ENCODE measurements at regions of chr7 and their contacts with region 1.

Region 1: GRCh38 chr7:155644178-155644970 is at the start of gene RBM33:
- DNase-seq: peak; percentile 63 to 84 (median 74)
- H3K4me3 ChIP-seq: peak within 1 kb of the TSS; percentile 78 to 100 (median 97)
- H3K27ac ChIP-seq: peak within 1 kb of the TSS; percentile 71 to 99 (median 94)
- H3K27me3 ChIP-seq: no peaks in the 10 kb centered on the region
- CTCF ChIP-seq: peak in 23 of 56 donors; percentile 1 to 61 (median 27)
- total RNA-seq, gene RBM33: 60.5 to 127 (median 90.5) TPM

Region 2: DNA sequence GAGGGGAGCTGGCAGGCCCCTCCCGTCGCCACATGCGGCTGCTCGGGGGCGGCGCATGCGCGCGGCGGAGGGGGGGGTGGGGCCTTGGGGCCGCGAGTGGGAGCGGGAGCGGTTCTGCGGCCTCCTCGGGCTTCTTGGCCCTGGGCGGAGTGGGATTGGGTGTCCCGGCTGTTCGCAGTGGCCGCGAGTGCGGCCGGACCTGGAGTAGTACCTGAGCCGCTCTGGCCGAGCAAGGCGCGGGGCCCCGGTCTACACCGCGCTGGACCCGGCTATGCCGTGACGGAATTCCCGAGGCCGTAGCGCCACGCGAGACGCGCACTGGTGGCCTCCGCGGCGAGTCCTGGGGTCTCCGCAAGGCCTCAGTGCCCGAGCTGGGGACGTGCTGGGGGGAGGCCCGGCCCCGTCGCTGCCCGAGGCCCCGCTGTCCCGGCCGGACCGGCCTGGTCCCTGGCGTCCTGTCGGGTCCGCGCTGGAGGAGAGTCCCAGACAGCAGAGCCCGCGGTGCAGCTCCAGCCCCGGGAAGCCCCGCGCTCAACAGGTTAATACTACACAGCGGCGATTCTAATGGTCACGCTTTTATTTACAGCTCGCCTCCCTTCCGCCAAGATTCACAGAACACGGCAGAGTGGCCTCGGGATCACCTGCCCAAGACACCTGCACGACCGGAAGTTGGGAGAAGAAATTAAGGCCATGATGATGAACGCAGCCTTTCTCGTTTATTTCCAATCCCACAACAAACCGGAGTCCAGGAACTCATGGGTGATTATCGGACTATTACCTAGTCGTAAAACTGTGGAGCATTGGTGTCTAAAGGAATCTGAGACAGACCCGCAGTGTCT is 640.8 kb before region 1 on chr7:
- intact Hi-C with region 1: loop called in 1 of 2 experiments (anchors 10 kb)
- DNase-seq: peak; percentile 42 to 92 (median 66)
- H3K4me3 ChIP-seq: peak overlapping the region; percentile 55 to 100 (median 96)
- H3K27ac ChIP-seq: peak overlapping the region in 58 of 59 donors; percentile 68 to 99 (median 94)
- H3K27me3 ChIP-seq: no peaks in the 10 kb centered on the region
- CTCF ChIP-seq: peak in 24 of 56 donors; percentile 5 to 46 (median 18)

Region 3: GRCh38 chr7:155598810-155599210 is 45.6 kb before region 1 on chr7:
- intact Hi-C with region 1: loop called in 1 of 2 experiments (anchors 5 kb)
- DNase-seq: peak; percentile 78 to 93 (median 88)
- H3K4me3 ChIP-seq: peak overlapping the region in 22 of 59 donors; percentile 0 to 49 (median 28)
- H3K27ac ChIP-seq: no peak overlapping the region
- H3K27me3 ChIP-seq: peaks cover 0 to under 1% (median 0%) of the 10 kb centered on the region in 45 donors
- CTCF ChIP-seq: peak; percentile 94 to 100 (median 99)

Region 4: GRCh38 chr7:155738652-155739537 is 94.5 kb after region 1 on chr7:
- intact Hi-C with region 1: loop called (anchors 5 to 10 kb)
- DNase-seq: peak; percentile 77 to 94 (median 83)
- H3K4me3 ChIP-seq: no peak overlapping the region
- H3K27ac ChIP-seq: no peak overlapping the region
- H3K27me3 ChIP-seq: no peaks in the 10 kb centered on the region
- CTCF ChIP-seq: peak; percentile 33 to 97 (median 81)

Measured in dorsolateral prefrontal cortex (tissue), 120 donors.